ENCODE measurements at regions of chr1 and their contacts with region 1.

Region 1: DNA sequence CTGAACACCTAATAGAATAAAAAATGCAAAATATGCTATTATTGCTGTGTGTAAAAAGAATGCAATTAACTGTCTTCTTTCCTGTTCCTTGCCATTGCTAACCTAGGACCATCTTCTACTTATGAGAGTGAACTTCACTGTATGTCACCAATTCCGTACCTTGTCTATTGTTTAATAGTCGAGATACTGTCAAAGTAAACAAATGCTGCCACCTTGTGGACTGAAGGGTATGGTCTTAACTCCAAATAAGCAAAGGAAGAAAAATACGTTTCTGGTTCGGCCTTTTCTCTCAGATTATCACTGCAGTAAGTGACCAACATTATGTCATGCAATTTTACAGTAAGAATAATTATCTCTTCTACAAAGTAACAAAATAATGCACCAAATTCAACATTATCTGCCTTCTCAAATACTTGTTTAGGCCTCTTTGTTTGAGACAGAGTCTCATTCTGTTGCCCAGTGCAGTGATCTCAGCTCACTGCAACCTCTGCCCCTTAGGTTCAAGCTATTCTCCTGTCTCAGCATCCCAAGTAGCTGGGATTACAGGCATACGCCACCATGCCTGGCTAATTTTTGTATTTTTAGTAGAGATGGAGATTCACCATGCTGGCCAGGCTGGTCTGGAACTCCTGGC is 133.4 kb downstream of the COP1 start:
- DNase-seq: no peak
- ATAC-seq: no peak
- H3K4me3 ChIP-seq: no peak overlapping the region
- H3K27ac ChIP-seq: no peak overlapping the region
- H3K4me1 ChIP-seq: no peaks in the 10 kb centered on the region
- H3K27me3 ChIP-seq: no peaks in the 10 kb centered on the region
- CTCF ChIP-seq: peak; percentile 23 to 69 (median 45)
- POLR2A ChIP-seq: no peak

Region 2: DNA sequence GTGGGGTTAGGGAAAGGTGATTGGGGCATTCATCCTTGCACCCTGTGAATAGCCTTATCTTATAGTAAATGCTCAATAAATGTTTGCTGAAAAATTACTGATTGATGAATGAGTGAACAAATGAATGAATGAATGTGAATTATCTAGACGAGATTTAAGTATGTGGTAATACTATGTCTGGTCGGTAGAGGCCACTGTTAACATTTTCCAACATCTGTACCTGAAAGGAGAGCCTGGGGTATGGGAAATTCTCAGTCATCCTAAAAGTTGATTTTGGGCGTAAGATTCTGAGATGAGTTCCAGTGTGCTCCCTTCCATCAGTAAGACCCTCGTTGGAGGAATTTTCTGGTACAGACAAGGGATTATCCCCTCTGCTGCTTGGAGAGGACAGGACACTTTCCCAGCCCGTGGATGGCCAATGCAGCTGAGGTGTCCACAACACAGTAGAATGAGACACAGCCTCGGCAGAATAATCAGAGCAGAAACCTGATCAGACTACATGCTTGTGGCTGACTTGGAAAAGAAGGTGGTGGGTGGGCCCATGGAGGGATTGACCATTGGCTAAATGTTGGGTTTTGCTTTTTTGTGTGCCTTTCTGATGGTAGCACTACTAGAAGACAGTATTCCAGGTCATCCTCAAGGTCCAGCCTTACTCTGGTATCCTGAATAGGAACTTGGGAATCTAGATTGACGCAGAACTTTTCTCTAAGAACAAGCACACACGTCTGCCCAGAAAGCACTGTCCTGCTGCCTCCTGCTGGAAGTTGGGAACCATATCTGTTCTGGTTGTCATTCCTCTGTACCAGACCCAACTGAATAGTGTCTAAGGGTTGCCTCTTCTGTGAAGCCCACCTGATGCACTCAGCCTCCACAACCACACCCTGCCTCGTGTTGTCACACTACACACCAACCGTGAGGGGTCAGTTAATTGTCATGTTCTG is 592.2 kb before region 1 on chr1:
- in situ Hi-C with region 1: loop called in 1 of 4 experiments (anchors 25 kb)
- intact Hi-C with region 1: loop called (anchors 5 kb)
- DNase-seq: no peak
- ATAC-seq: no peak
- H3K4me3 ChIP-seq: no peak overlapping the region
- H3K27ac ChIP-seq: no peak overlapping the region
- H3K4me1 ChIP-seq: no peaks in the 10 kb centered on the region
- H3K27me3 ChIP-seq: no peaks in the 10 kb centered on the region
- CTCF ChIP-seq: peak in 3 of 5 experiments; percentile 16 to 50 (median 49)
- POLR2A ChIP-seq: no peak

Region 3: DNA sequence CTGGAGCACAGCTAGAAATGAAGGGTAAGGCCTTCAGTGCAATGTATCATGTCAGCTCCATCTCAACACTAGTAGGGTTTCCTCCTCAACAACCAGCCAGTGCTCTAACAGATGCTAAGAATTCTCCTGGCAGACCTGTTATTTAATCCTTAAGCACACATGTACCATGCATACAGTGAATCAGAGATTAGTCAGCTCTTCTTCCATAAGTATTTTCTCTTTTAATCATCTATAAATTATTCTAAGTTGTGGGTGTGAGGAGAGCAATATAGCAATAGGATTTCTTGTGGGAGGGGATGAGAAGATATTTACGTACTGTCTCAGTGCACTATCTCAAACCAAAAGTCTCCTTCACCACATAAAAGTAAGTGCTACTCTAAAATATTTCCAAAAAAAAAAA is 38.2 kb after region 1 on chr1:
- in situ Hi-C with region 1: no loop called
- intact Hi-C with region 1: no loop called
- DNase-seq: no peak
- ATAC-seq: no peak
- H3K4me3 ChIP-seq: no peak overlapping the region
- H3K27ac ChIP-seq: no peak overlapping the region
- H3K4me1 ChIP-seq: peaks cover 6 to 8% of the 10 kb centered on the region in 2 donors
- H3K27me3 ChIP-seq: no peaks in the 10 kb centered on the region
- CTCF ChIP-seq: no peak
- POLR2A ChIP-seq: no peak